ENCODE measurements at regions of chr2 and their contacts with region 1.

Region 1: DNA sequence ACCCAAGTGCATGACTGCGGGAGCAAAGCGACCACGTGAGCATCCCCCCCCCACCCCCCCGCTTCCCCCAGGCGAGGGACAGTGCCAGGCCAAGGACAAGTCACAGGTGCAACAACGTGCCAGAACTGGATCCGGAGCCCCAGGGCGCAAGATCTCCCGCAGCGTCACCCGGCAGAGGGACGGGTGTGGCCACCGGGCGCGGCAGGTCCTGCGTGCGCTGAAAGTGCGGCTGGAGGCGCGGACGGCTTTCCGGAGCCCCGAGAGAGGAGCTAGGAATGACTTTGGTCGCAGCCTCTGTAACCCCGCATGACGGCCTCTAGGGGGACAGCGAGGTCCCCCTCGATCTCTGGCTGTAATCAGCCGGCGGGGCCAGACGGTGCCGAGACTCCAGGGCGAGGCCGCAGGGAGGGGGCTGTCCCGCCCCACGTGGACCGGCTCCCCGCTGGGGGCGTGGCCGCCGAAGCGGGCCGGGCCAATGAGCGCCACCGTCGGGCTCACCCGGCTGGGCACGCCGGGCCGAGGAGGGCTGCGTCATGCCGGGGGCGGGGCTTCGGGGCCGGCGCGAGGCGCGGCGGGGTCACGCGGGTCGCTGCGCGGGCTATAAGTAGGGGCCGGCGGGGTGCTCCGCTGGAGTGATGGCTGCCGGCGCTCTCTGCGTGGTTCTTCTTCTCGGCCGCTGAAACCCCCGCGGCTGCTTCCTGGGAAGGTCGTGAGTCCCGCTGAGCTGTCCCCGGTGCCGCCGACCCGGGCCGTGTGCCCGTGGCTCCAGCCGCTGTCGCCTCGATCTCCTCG is at the start of gene SLC20A1:
- DNase-seq: peak; percentile 95 to 100 (median 99)
- ATAC-seq: peak; percentile 98
- H3K4me3 ChIP-seq: peak within 1 kb of the TSS; percentile 71
- H3K4me3 Mint-ChIP-seq: peak within 1 kb of the TSS; percentile 89 to 100 (median 93)
- H3K27ac ChIP-seq: peak within 1 kb of the TSS; percentile 94
- H3K27ac Mint-ChIP-seq: peak within 1 kb of the TSS; percentile 79 to 94 (median 91)
- H3K4me1 ChIP-seq: peaks cover 34 to 47% of the 10 kb centered on the region in 2 donors
- H3K4me1 Mint-ChIP-seq: peaks cover 37 to 74% (median 58%) of the 10 kb centered on the region in 7 donors
- H3K27me3 ChIP-seq: no peaks in the 10 kb centered on the region
- H3K27me3 Mint-ChIP-seq: no peaks in the 10 kb centered on the region
- total RNA-seq, gene SLC20A1: 94.4 to 164 (median 120) TPM

Region 2: DNA sequence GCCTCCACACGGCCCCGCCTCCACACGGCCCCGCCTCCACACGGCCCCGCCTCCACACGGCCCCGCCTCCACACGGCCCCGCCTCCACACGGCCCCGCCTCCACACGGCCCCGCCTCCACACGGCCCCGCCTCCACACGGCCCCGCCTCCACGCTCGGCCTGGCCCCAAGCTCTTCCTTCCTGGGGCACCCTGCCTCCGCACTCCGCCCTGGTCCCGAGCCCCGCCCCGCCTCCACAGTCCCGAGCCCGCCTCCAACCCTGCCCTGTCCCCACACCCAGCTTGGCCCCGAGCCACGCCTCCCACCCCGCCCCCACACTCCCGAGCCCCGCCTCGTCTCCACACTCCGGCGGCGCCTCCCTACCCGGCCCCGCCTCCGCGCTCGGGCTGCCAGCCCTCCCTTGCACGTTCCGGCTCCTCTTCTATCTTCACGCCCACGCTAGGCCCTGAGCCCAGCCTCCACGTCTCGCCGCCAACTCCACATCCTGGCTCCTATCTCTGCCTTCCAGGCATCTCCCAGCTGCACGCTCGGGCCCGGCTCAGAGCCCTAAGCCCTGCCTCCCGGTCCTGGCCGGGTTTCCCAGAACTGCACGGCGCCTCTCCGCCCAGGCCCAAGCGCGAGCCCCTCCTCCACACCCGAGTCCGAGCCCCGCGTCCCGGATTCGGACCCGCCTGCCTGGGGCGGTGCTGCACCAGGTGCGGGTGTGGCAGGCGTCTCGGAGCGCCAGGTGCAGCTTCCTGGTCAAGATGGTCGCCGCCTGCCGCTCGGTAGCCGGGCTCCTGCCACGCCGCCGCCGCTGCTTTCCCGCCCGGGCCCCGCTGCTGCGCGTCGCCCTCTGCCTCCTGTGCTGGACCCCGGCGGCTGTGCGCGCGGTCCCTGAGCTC is 590.4 kb before region 1 on chr2 and contains the start of gene TMEM87B:
- CTCF ChIA-PET with region 1: no interaction called
- POLR2A ChIA-PET with region 1: no interaction called
- intact Hi-C with region 1: loop called (anchors 1 to 2 kb)
- DNase-seq: peak; percentile 90 to 98 (median 96)
- ATAC-seq: peak; percentile 80
- H3K4me3 ChIP-seq: peak within 1 kb of the TSS; percentile 85
- H3K4me3 Mint-ChIP-seq: peak within 1 kb of the TSS; percentile 80 to 100 (median 95)
- H3K27ac ChIP-seq: peak within 1 kb of the TSS; percentile 82
- H3K27ac Mint-ChIP-seq: peak within 1 kb of the TSS; percentile 92 to 100 (median 98)
- H3K4me1 ChIP-seq: peaks cover 16 to 19% of the 10 kb centered on the region in 2 donors
- H3K4me1 Mint-ChIP-seq: peaks cover 33 to 48% (median 42%) of the 10 kb centered on the region in 7 donors
- H3K27me3 ChIP-seq: no peaks in the 10 kb centered on the region
- H3K27me3 Mint-ChIP-seq: peaks cover 0 to 2% (median 0%) of the 10 kb centered on the region in 5 donors
- total RNA-seq, gene TMEM87B: 14.0 to 26.9 (median 17.4) TPM

Region 3: GRCh38 chr2:112542123-112542983 is 103.2 kb before region 1 on chr2 and contains the start of gene POLR1B:
- CTCF ChIA-PET with region 1: no interaction called
- POLR2A ChIA-PET with region 1: interaction called, 4 read pairs
- intact Hi-C with region 1: loop called (anchors 1 to 2 kb)
- DNase-seq: peak in 8 of 9 donors; percentile 57 to 81 (median 77)
- ATAC-seq: peak; percentile 88
- H3K4me3 ChIP-seq: peak within 1 kb of the TSS; percentile 95
- H3K4me3 Mint-ChIP-seq: no peak within 1 kb of the TSS
- H3K27ac ChIP-seq: peak within 1 kb of the TSS; percentile 89
- H3K27ac Mint-ChIP-seq: peak within 1 kb of the TSS in 1 of 9 donors; percentile 98
- H3K4me1 ChIP-seq: peaks cover 14 to 15% of the 10 kb centered on the region in 2 donors
- H3K4me1 Mint-ChIP-seq: peaks cover 12 to 24% (median 19%) of the 10 kb centered on the region in 7 donors
- H3K27me3 ChIP-seq: no peaks in the 10 kb centered on the region
- H3K27me3 Mint-ChIP-seq: no peaks in the 10 kb centered on the region
- total RNA-seq, gene POLR1B: 10.1 to 41.8 (median 25.2) TPM

Region 4: GRCh38 chr2:112572022-112572421 is 73.5 kb before region 1 on chr2:
- CTCF ChIA-PET with region 1: no interaction called
- POLR2A ChIA-PET with region 1: no interaction called
- intact Hi-C with region 1: no loop called
- DNase-seq: no peak
- ATAC-seq: no peak
- H3K4me3 ChIP-seq: no peak overlapping the region
- H3K4me3 Mint-ChIP-seq: no peak overlapping the region
- H3K27ac ChIP-seq: no peak overlapping the region
- H3K27ac Mint-ChIP-seq: no peak overlapping the region
- H3K4me1 ChIP-seq: no peaks in the 10 kb centered on the region
- H3K4me1 Mint-ChIP-seq: no peaks in the 10 kb centered on the region
- H3K27me3 ChIP-seq: no peaks in the 10 kb centered on the region
- H3K27me3 Mint-ChIP-seq: no peaks in the 10 kb centered on the region

Region 5: DNA sequence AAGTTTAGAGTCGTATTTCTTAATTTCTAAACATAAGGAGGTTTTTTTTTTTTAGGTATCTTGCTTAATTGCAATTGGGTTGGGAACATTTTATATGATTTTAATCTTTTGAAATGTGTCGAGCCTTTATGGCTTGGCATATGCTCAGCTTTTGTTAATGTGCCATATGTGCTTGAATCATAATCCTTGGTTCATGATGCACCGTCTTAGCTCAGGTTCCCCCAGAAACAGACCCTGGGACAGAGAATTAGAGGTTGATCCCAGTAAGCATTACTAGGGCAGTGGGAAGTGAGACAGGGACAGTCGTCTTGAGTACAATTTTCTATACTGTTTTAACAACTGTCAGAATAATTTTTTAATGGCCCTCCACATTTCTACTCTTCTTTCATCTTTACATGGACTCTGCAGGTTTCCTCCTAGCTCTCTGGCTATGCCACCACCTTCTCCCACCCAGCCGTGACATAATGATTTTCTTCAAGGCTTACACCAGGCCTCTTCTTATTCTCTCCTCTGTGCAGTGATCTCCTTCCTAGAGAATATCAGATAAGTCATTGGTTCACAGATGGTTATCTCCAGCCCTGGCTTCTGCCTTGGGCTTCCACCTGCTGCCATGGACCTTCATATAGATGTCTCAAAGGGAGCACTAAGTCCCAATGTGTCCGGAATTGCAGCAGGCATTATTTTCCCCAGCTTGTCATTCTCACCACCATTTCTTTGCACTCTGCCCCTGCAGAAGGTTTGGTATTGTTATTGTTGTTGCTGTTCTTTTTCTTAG is 51.6 kb before region 1 on chr2:
- CTCF ChIA-PET with region 1: no interaction called
- POLR2A ChIA-PET with region 1: no interaction called
- intact Hi-C with region 1: no loop called
- DNase-seq: no peak
- ATAC-seq: no peak
- H3K4me3 ChIP-seq: no peak overlapping the region
- H3K4me3 Mint-ChIP-seq: no peak overlapping the region
- H3K27ac ChIP-seq: no peak overlapping the region
- H3K27ac Mint-ChIP-seq: no peak overlapping the region
- H3K4me1 ChIP-seq: no peaks in the 10 kb centered on the region
- H3K4me1 Mint-ChIP-seq: peaks cover 0 to 3% (median 0%) of the 10 kb centered on the region in 7 donors
- H3K27me3 ChIP-seq: no peaks in the 10 kb centered on the region
- H3K27me3 Mint-ChIP-seq: no peaks in the 10 kb centered on the region

Region 6: DNA sequence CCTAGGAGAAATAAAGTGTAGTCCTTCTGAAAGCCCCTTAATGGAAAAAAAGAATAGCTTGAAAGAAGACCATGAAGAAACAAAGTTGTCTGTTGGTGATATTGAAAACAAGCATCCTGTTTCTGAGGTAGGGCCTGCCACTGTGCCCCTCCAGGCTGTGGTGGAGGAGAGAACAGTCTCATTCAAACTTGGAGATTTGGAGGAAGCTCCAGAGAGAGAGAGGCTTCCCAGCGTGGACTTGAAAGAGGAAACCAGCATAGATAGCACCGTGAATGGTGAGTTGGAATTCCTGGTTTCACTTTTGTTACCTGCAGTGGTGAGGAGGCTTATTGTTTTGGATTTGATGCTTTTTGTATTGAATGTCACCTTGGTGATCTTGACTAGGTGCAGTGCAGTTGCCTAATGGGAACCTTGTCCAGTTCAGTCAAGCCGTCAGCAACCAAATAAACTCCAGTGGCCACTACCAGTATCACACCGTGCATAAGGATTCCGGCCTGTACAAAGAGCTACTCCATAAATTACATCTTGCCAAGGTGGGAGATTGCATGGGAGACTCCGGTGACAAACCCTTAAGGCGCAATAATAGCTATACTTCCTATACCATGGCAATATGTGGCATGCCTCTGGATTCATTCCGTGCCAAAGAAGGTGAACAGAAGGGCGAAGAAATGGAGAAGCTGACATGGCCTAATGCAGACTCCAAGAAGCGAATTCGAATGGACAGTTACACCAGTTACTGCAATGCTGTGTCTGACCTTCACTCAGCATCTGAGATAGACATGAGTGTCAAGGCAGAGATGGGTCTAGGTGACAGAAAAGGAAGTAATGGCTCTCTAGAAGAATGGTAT is 13.5 kb after region 1 on chr2:
- CTCF ChIA-PET with region 1: no interaction called
- POLR2A ChIA-PET with region 1: interaction called, 16 read pairs
- intact Hi-C with region 1: loop called (anchors 1 to 2 kb)
- DNase-seq: no peak
- ATAC-seq: no peak
- H3K4me3 ChIP-seq: no peak overlapping the region
- H3K4me3 Mint-ChIP-seq: peak overlapping the region in 2 of 10 donors; percentile 20 to 38
- H3K27ac ChIP-seq: no peak overlapping the region
- H3K27ac Mint-ChIP-seq: peak overlapping the region in 8 of 9 donors; percentile 41 to 85 (median 66)
- H3K4me1 ChIP-seq: peaks cover 0 to 22% of the 10 kb centered on the region in 2 donors
- H3K4me1 Mint-ChIP-seq: peaks cover 27 to 62% (median 40%) of the 10 kb centered on the region in 7 donors
- H3K27me3 ChIP-seq: no peaks in the 10 kb centered on the region
- H3K27me3 Mint-ChIP-seq: no peaks in the 10 kb centered on the region

Region 7: DNA sequence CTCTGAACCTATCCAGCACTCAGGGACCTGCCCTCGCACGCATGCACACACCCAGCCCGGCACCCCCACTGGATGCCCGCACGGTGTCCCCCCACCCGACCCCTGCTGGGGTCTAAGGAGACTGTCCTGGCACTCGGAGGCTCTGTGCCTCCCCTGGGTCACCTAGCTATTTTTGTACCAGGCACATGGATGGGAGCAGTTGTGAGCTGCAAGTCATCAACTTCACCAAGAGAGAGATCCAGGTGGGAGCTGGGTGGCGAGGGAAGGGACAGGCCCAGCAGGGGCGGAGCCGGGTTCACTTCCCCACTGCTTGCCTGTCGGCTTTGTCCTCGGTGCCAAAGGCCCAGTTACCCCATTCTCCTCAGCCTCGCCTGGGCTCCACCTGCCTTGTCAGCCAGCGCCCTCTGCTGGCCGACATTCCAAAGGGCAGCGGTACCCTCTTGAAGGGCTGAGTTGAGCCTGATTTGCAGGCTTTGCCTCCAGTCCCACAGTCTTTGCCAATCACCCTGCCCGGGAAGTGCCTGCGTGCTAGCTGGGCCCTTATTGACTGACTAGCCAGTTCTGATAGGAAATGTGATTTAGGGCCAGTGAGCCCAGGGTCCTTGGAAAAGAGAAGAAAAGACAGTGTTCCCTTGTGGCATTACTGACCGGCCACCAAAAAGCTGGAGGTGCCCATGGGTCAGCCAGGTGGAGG is 81.1 kb after region 1 on chr2:
- CTCF ChIA-PET with region 1: interaction called, 3 read pairs
- POLR2A ChIA-PET with region 1: interaction called, 4 read pairs
- intact Hi-C with region 1: loop called in 1 of 2 experiments (anchors 1 kb)
- DNase-seq: peak; percentile 68 to 89 (median 83)
- ATAC-seq: peak; percentile 96
- H3K4me3 ChIP-seq: no peak overlapping the region
- H3K4me3 Mint-ChIP-seq: no peak overlapping the region
- H3K27ac ChIP-seq: no peak overlapping the region
- H3K27ac Mint-ChIP-seq: peak overlapping the region in 2 of 9 donors; percentile 51 to 73
- H3K4me1 ChIP-seq: no peaks in the 10 kb centered on the region
- H3K4me1 Mint-ChIP-seq: peaks cover 0 to 29% (median 0%) of the 10 kb centered on the region in 7 donors
- H3K27me3 ChIP-seq: no peaks in the 10 kb centered on the region
- H3K27me3 Mint-ChIP-seq: peaks cover 0 to 2% (median 0%) of the 10 kb centered on the region in 5 donors

Region 8: GRCh38 chr2:113173542-113174395 is 528.3 kb after region 1 on chr2 and contains the start of gene PSD4:
- CTCF ChIA-PET with region 1: no interaction called
- POLR2A ChIA-PET with region 1: no interaction called
- intact Hi-C with region 1: loop called in 1 of 2 experiments (anchors 10 kb)
- DNase-seq: peak; percentile 61 to 92 (median 90)
- ATAC-seq: peak; percentile 88
- H3K4me3 ChIP-seq: peak within 1 kb of the TSS; percentile 80
- H3K4me3 Mint-ChIP-seq: peak within 1 kb of the TSS; percentile 87 to 99 (median 94)
- H3K27ac ChIP-seq: peak within 1 kb of the TSS; percentile 92
- H3K27ac Mint-ChIP-seq: peak within 1 kb of the TSS; percentile 89 to 98 (median 93)
- H3K4me1 ChIP-seq: peaks cover 67 to 68% of the 10 kb centered on the region in 2 donors
- H3K4me1 Mint-ChIP-seq: peaks cover 58 to 84% (median 72%) of the 10 kb centered on the region in 7 donors
- H3K27me3 ChIP-seq: no peaks in the 10 kb centered on the region
- H3K27me3 Mint-ChIP-seq: peaks cover 0 to 5% (median 0%) of the 10 kb centered on the region in 5 donors
- total RNA-seq, gene PSD4: 96.4 to 399 (median 167) TPM